Dorsolateral prefrontal cortex (tissue), 120 donors: ENCODE measurements at regions of chr6 and their contacts with region 1.

Region 1: GRCh38 chr6:152124429-152125074 is 317.1 kb downstream of the ESR1 start:
- DNase-seq: no peak
- H3K4me3 ChIP-seq: no peak overlapping the region
- H3K27ac ChIP-seq: peak overlapping the region in 1 of 59 donors; percentile 5
- H3K27me3 ChIP-seq: no peaks in the 10 kb centered on the region
- CTCF ChIP-seq: peak; percentile 56 to 86 (median 76)

Region 2: DNA sequence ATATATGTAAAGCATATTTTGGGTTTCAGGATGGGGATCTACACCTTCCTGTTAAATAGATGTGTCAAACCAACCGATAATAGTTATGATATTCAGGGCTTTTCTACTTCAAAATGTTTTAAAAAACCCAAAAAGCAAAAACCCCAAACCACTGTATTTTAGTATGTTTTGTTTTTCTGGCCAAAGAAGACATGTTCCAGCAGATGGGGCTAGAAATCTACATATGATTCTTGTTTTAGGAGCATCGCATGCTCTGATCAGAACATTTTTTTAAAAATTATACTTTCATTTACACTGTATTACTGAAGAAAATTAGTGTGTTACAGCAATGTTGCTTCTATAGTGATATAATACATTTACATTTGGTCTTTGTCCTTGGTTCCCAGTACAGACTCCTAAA is 683.6 kb before region 1 on chr6:
- intact Hi-C with region 1: loop called in 1 of 2 experiments (anchors 10 kb)
- DNase-seq: no peak
- H3K4me3 ChIP-seq: peak overlapping the region in 2 of 59 donors; percentile 1 to 2
- H3K27ac ChIP-seq: peak overlapping the region in 7 of 59 donors; percentile 1 to 34 (median 8)
- H3K27me3 ChIP-seq: no peaks in the 10 kb centered on the region
- CTCF ChIP-seq: peak in 53 of 56 donors; percentile 28 to 75 (median 51)

Region 3: GRCh38 chr6:151765444-151765886 is 359.1 kb before region 1 on chr6:
- intact Hi-C with region 1: loop called (anchors 5 kb)
- DNase-seq: peak in 2 of 10 donors; percentile 19 to 20
- H3K4me3 ChIP-seq: no peak overlapping the region
- H3K27ac ChIP-seq: no peak overlapping the region
- H3K27me3 ChIP-seq: peaks cover 0 to 7% (median 0%) of the 10 kb centered on the region in 45 donors
- CTCF ChIP-seq: peak; percentile 47 to 90 (median 76)

Region 4: DNA sequence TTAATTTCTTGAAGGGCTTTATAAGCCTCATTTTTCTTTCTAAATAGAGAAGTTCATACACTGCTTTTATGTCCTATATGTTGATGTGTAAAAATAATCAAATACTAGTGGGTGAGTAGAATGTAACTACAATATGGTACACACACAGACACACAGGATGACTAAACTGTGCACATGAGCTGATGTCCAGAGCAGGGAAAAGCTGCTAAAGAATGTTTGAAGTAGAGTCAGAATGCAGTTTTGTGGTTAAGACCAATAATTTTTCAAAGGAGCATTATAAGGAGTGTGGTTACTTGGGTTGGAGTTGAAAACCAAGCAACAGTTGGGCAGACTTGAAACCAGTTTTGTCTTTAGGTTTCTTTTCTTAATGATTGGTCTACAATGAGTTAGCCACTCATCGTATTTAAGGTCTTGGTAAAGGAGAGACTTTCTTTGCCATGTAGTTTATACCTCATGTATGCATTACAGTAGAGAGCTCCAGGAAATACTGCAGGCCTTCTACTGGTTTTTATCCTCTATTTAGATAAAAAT is 120.5 kb before region 1 on chr6:
- intact Hi-C with region 1: no loop called
- DNase-seq: no peak
- H3K4me3 ChIP-seq: no peak overlapping the region
- H3K27ac ChIP-seq: no peak overlapping the region
- H3K27me3 ChIP-seq: no peaks in the 10 kb centered on the region
- CTCF ChIP-seq: no peak

Region 5: GRCh38 chr6:152054441-152054840 is 70.1 kb before region 1 on chr6:
- intact Hi-C with region 1: no loop called
- DNase-seq: no peak
- H3K4me3 ChIP-seq: no peak overlapping the region
- H3K27ac ChIP-seq: no peak overlapping the region
- H3K27me3 ChIP-seq: peaks cover 0 to 25% (median 0%) of the 10 kb centered on the region in 45 donors
- CTCF ChIP-seq: no peak